ENCODE measurements at regions of chr1 and their contacts with region 1.

Region 1: DNA sequence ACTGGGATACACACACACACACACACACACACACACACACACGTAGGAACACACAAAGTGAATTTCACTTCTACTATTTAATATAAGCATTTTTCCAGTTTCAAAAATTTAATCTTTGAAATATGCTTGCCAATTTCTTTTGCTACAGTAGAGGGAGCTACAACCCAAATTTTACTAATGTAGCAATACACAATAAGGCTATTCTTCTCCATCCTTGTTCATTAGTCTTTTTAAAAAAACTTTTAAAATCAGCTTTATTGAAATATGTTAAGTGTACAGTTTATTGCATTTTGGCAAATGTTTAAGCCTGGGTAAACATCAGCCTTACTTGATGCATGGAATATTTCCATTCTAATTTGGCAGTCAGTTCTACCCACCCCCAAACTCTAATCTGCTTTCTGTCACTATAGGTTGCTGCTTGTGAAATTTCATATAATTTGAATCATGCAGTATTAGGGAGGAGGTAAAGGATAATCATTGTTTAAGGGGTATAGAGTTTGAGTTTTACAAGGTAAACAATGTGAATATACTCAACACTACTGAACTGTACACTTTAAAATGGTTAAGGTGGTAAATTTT is 93.0 kb upstream of the TENT5C start:
- H3K4me3 ChIP-seq: no peak overlapping the region
- H3K27ac ChIP-seq: no peak overlapping the region
- H3K4me1 ChIP-seq: no peaks in the 10 kb centered on the region
- CTCF ChIP-seq: peak; percentile 37; the same call in 1 of the 2 replicates

Region 2: DNA sequence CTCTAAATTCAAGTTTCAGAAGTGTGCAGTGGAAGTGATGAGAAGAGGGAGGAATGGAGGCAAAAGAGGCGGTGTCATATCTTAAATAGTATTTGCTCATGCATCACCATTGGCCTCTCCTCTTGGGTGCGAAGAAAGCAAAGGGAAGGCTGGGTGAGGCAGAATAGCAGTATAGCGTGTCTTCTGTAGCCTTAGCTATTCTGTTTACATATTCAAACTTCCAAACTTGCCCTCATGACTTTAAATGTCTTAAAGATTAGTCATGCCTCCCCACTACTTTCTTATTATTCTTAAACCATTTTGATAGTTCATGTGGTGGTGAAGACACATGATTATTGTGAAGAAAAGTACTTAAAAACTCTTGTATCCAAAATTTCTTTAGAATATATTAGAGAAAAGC is 11.6 kb before region 1 on chr1:
- CTCF ChIA-PET with region 1: interaction called, 16 read pairs
- POLR2A ChIA-PET with region 1: no interaction called
- H3K4me3 ChIP-seq: no peak overlapping the region
- H3K27ac ChIP-seq: no peak overlapping the region
- H3K4me1 ChIP-seq: no peaks in the 10 kb centered on the region
- CTCF ChIP-seq: no peak

Region 3: DNA sequence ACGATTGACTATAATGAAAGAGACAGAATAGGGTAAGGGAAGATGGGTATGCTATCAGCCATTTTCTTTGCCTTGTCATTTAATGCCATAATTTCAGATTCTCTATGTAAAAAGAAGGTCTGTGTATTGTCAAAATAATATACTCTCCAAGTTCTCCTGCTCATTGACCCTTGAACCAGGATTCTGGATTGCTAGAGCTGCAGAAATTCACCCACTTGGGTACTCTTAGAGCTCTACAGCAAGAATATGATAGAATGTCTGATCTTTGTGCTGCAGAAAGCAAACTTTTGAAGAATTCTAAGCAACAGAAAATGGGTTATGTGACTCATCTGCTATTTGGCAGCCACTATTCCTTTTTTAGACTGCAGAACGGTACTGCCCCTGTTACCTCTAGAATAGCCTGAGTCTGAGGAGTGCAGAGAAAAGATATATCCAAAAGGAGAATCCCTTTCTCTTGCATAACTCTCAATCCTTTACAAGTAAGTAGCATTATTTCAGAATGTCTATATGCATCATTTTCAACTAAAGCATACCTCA is 14.8 kb after region 1 on chr1:
- CTCF ChIA-PET with region 1: interaction called, 13 read pairs
- POLR2A ChIA-PET with region 1: no interaction called
- H3K4me3 ChIP-seq: no peak overlapping the region
- H3K27ac ChIP-seq: no peak overlapping the region
- H3K4me1 ChIP-seq: no peaks in the 10 kb centered on the region
- CTCF ChIP-seq: no peak

Region 4: DNA sequence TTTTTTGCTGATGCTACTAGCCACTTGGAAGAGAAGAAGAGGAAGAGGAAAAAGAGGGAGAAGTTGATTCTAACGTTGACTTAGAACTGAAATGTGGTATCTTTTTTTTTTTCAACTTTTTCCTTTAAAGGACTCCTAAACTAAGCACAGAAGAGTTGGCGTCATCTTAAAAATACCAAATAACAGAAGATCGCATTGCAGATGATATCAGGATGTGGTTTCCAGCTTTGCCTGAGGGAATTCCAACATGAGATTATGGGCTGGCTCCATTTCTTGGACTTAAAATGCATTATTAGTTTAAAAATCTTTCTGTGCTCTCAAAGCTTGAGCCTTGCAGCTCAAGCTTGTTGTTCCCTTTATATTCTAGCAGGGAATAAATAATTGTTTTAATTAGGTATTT is 446.5 kb after region 1 on chr1:
- CTCF ChIA-PET with region 1: no interaction called
- POLR2A ChIA-PET with region 1: no interaction called
- H3K4me3 ChIP-seq: no peak overlapping the region
- H3K27ac ChIP-seq: no peak overlapping the region
- H3K4me1 ChIP-seq: no peaks in the 10 kb centered on the region
- CTCF ChIP-seq: no peak